Heart left ventricle (tissue), 16 donors: ENCODE measurements at regions of chr11 and their contacts with region 1.

Region 1: GRCh38 chr11:78416305-78417178 is 1.1 kb downstream of the GAB2 start:
- DNase-seq: peak; percentile 87 to 93 (median 89)
- ATAC-seq: peak; percentile 67 to 78 (median 74)
- H3K4me3 ChIP-seq: peak overlapping the region; percentile 58 to 100 (median 88)
- H3K27ac ChIP-seq: peak overlapping the region; percentile 93 to 99 (median 97)
- H3K4me1 ChIP-seq: peaks cover 0 to 60% (median 32%) of the 10 kb centered on the region in 12 donors
- H3K27me3 ChIP-seq: no peaks in the 10 kb centered on the region
- CTCF ChIP-seq: peak in 11 of 12 donors; percentile 25 to 67 (median 52)
- POLR2A ChIP-seq: peak in 1 of 2 donors; percentile 87

Region 2: GRCh38 chr11:78139422-78140391 is 276.8 kb before region 1 on chr11 and contains the start of gene ALG8:
- intact Hi-C with region 1: loop called in 4 of 10 experiments (anchors 5 to 10 kb)
- DNase-seq: peak; percentile 95 to 98 (median 96)
- ATAC-seq: peak; percentile 97 to 99 (median 99)
- H3K4me3 ChIP-seq: peak within 1 kb of the TSS; percentile 47 to 88 (median 73)
- H3K27ac ChIP-seq: peak within 1 kb of the TSS; percentile 20 to 79 (median 74)
- H3K4me1 ChIP-seq: peaks cover 0 to 28% (median 14%) of the 10 kb centered on the region in 12 donors
- H3K27me3 ChIP-seq: no peaks in the 10 kb centered on the region
- CTCF ChIP-seq: no peak
- POLR2A ChIP-seq: peak in 1 of 2 donors; percentile 59
- total RNA-seq, gene ALG8: 14.1 to 24.6 (median 17.7) TPM

Region 3: DNA sequence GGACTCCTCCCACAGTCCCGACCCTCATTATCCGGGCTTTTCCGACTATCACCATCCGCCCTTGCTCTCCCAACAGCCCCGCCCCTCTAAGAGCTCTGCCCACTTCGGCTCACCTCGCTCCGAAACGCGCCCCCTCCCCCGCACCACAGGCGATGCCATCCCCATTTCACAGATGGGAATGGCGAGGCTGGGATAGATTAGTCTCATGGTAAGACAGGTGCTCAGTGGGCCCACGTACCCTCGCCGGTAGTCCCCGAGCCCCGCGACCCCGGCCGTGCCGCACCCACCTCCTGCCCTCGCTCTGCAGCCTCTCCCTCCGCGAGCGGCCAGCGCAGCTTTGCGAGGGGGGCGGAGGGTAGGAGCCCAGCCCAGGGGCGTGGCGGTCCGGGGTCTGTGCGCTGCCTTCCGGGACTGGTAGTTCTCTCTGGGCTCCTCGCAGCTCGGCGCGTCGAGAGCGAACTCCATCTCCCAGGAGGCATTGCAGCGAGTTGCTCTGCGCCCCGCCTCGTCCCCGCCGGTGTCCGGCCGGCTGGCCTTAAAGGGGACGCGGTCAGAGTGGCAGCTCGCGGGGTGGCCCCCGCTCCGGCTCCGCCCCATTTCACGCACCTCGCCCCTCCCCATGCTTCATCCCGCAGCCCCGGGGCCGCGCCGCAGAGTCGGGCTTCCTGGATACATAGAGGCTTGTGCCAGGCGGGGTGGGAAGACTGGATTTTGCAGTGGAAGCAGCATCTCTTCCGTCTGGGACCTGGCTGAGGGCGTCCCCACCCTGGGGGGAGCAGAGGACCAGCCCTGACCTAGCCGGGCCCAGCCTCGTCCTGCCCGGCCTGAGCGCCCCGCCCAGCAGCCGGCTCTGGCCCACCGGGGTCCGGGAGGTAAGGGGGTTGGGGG is 228.0 kb before region 1 on chr11 and contains the starts of genes KCTD21 and USP35:
- intact Hi-C with region 1: loop called in 1 of 10 experiments (anchors 5 kb)
- DNase-seq: peak; percentile 97 to 99 (median 99)
- ATAC-seq: peak; percentile 97 to 98 (median 98)
- H3K4me3 ChIP-seq: peak within 1 kb of the TSS; percentile 71 to 96 (median 88)
- H3K27ac ChIP-seq: peak within 1 kb of the TSS in 11 of 12 donors; percentile 82 to 95 (median 89)
- H3K4me1 ChIP-seq: peaks cover 2 to 53% (median 37%) of the 10 kb centered on the region in 12 donors
- H3K27me3 ChIP-seq: no peaks in the 10 kb centered on the region
- CTCF ChIP-seq: no peak
- POLR2A ChIP-seq: peak in 1 of 2 donors; percentile 83
- total RNA-seq, gene KCTD21: 5.6 to 10.9 (median 7.2) TPM
- total RNA-seq, gene USP35: 4.5 to 8.1 (median 5.3) TPM

Region 4: GRCh38 chr11:78256962-78257361 is 159.6 kb before region 1 on chr11:
- intact Hi-C with region 1: loop called in 2 of 10 experiments (anchors 10 kb)
- DNase-seq: peak; percentile 78 to 86 (median 82)
- ATAC-seq: peak; percentile 85 to 96 (median 94)
- H3K4me3 ChIP-seq: no peak overlapping the region
- H3K27ac ChIP-seq: peak overlapping the region; percentile 29 to 78 (median 63)
- H3K4me1 ChIP-seq: peaks cover 0 to 69% (median 33%) of the 10 kb centered on the region in 12 donors
- H3K27me3 ChIP-seq: no peaks in the 10 kb centered on the region
- CTCF ChIP-seq: no peak
- POLR2A ChIP-seq: no peak

Region 5: GRCh38 chr11:78350646-78351165 is 65.8 kb before region 1 on chr11:
- intact Hi-C with region 1: loop called in 6 of 10 experiments (anchors 5 to 10 kb)
- DNase-seq: peak in 4 of 5 donors; percentile 35 to 70 (median 45)
- ATAC-seq: peak; percentile 60 to 81 (median 73)
- H3K4me3 ChIP-seq: peak overlapping the region in 9 of 12 donors; percentile 15 to 43 (median 30)
- H3K27ac ChIP-seq: peak overlapping the region; percentile 64 to 96 (median 80)
- H3K4me1 ChIP-seq: peaks cover 0 to 94% (median 73%) of the 10 kb centered on the region in 12 donors
- H3K27me3 ChIP-seq: no peaks in the 10 kb centered on the region
- CTCF ChIP-seq: peak in 2 of 12 donors; percentile 24 to 26
- POLR2A ChIP-seq: no peak